Breast epithelium (tissue), 4 donors: ENCODE measurements at regions of chr10 and their contacts with region 1.

Region 1: GRCh38 chr10:19749185-19749729 is 67.0 kb upstream of the PLXDC2 start:
- DNase-seq: no peak
- H3K4me3 ChIP-seq: no peak overlapping the region
- H3K27ac ChIP-seq: no peak overlapping the region
- H3K4me1 ChIP-seq: no peaks in the 10 kb centered on the region
- H3K27me3 ChIP-seq: no peaks in the 10 kb centered on the region
- CTCF ChIP-seq: no peak
- POLR2A ChIP-seq: no peak

Region 2: GRCh38 chr10:20195076-20195475 is 445.8 kb after region 1 on chr10:
- intact Hi-C with region 1: no loop called
- DNase-seq: no peak
- H3K4me3 ChIP-seq: no peak overlapping the region
- H3K27ac ChIP-seq: no peak overlapping the region
- H3K4me1 ChIP-seq: no peaks in the 10 kb centered on the region
- H3K27me3 ChIP-seq: no peaks in the 10 kb centered on the region
- CTCF ChIP-seq: no peak
- POLR2A ChIP-seq: no peak

Region 3: DNA sequence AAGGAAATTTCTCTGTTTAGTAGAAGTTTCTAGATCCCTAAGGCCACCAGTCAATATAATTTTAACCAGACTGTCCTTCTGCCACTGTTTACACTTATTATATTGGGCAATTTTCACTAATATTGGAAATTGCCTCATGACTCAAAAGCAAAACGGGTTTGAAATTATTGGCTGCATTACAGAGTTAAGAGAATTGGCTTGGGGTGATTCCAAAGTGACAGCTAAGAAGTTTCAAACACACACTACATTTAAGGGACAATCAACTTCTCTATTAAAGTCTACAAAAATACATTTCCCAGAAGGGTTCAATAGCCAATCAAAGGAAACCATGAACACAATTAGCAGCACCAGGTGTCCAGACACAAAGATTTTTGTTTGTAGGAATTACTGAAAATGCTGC is 1035.9 kb after region 1 on chr10:
- intact Hi-C with region 1: loop called (anchors 5 kb)
- DNase-seq: no peak
- H3K4me3 ChIP-seq: no peak overlapping the region
- H3K27ac ChIP-seq: no peak overlapping the region
- H3K4me1 ChIP-seq: no peaks in the 10 kb centered on the region
- H3K27me3 ChIP-seq: no peaks in the 10 kb centered on the region
- CTCF ChIP-seq: no peak
- POLR2A ChIP-seq: no peak